Calu3 (cell line): ENCODE measurements at regions of chr3 and their contacts with region 1.

Region 1: DNA sequence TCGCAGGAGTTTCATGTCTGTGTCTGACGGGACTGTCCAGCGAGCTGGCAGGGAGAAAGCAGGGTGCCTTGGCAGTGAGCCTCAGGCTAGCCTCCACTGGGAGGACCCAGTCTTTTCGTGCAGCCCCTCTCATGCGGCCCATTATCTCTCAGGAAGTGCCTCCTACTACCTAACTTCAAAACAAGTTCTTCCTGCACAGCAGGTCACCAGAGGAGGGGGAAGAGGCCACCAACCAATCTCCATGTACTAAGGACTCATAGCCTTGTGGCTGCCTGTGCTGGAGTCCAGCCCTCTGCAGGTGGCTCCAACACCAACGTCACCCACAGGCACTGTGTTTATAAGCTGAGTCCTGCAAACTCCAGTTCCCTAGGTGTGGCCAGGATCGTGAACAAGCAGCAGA is 4.8 kb downstream of the VIPR1 start:
- DNase-seq: peak; percentile 60
- H3K4me3 Mint-ChIP-seq: no peak overlapping the region
- H3K27ac Mint-ChIP-seq: peak overlapping the region; percentile 75
- H3K4me1 Mint-ChIP-seq: peaks cover 22% of the 10 kb centered on the region
- H3K27me3 Mint-ChIP-seq: no peaks in the 10 kb centered on the region
- CTCF ChIP-seq: no peak

Region 2: DNA sequence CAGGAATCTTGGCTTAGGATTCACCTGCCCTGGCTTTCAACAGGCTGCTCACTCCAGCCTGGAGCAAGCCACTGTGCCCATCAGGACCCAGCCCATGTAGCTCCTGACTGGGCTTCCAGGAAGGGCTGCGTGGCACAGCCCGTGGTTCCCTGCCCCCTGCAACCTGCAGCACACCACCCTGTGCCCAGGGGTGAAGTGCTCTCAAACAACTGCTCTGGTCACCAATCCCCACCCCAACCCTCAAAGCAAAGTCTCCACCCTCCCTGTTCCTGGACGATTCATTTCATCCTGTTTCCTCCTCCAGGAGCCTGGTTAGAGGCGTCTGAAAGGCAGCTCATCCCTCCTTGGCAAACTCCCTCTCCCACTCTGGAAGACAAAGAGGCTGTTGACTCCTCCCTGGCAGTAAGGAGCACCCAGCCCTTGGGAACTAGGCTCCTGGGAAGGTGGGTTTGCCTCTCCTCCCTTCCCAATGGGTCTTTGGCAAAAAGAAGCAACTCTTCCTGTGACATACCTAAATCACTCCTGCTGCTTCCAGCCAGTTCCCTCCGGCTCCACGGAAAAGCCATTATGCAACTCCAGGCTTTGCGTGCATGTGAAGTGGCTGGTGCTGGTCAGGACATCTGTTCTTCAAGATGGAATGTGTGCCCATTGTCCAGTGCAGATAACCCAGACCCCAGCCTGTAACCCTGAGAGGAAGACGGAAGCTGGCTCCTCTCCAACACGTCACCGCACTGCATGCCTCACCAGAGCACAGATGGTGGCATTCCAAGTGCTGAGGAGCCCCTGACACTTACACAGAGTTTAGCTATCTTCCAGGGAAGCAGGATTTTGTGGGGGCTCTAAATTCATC is 33.9 kb before region 1 on chr3:
- CTCF ChIA-PET with region 1: interaction called, 9 read pairs
- intact Hi-C with region 1: loop called (anchors 5 kb)
- DNase-seq: peak; percentile 75
- H3K4me3 Mint-ChIP-seq: no peak overlapping the region
- H3K27ac Mint-ChIP-seq: peak overlapping the region; percentile 28
- H3K4me1 Mint-ChIP-seq: peaks cover 48% of the 10 kb centered on the region
- H3K27me3 Mint-ChIP-seq: no peaks in the 10 kb centered on the region
- CTCF ChIP-seq: no peak